Activated CD4-positive, alpha-beta memory T cell treated with anti-CD3 and anti-CD28 coated beads, Interleukin-2, amount 10 ng/mL, durations not matched to agents 7 days and 5 days (primary cell): ENCODE measurements at regions of chr5 and their contacts with region 1.

Region 1: DNA sequence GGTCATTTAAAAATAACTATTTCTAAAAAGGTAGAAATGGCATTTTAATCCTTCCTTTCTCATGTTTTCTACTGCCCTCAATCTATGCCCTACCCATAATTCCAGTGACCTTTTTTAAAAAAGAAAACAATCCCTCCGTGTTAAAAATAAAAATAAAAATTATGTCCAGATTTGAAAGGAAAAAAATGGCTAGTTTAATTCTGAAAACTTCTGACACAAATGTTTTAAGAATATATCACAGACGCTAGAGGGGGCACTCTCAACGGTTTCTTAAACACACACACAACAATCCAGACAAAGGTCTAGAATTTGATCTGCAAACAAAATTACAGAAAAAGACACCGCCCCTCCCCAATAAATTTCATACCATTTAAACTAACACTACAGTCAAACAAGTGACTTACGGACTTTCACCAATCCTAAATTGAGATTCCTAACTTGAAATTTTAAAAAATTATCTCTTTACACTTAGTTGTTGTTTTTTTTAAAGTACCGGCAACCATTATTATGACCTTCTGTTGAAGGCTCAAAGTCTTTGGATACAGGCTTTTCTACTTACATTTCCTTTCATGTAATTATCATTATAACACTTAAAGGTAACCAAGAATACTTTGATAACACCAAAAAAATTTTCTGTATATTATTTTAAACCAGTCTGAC is 38.2 kb downstream of the CLINT1 start:
- DNase-seq: no peak
- H3K4me3 Mint-ChIP-seq: no peak overlapping the region
- H3K27ac Mint-ChIP-seq: no peak overlapping the region
- H3K4me1 Mint-ChIP-seq: peaks cover 17% of the 10 kb centered on the region
- H3K27me3 Mint-ChIP-seq: no peaks in the 10 kb centered on the region

Region 2: DNA sequence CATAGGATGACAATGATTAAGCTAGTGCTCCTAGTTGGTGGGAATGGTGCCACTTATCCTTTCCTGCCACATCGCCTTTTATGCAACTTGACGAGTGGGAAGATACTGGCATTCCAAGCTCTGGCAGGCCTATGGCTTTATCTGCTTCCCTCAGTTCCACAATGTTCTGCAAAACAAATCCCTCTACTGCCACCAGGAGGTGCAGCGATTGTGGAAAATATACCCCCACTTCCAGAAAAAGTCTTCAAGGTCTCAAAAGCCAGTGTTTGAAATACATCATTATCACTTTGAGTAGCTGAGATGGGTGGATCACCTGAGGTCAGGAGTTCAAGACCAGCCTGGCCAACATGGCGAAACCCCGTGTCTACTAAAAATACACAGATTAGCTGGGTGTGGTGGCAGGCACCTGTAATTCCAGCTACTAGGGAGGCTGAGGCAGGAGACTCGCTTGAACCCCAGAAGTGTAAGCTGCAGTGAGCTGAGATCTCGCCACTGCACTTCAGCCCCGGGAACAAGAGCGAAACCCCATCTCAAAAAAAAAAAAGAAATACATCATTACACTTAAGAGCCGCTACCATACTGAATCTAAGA is 34.8 kb after region 1 on chr5:
- CTCF ChIA-PET with region 1: interaction called, 15 read pairs
- POLR2A ChIA-PET with region 1: interaction called, 3 read pairs
- DNase-seq: peak; percentile 22
- H3K4me3 Mint-ChIP-seq: no peak overlapping the region
- H3K27ac Mint-ChIP-seq: no peak overlapping the region
- H3K4me1 Mint-ChIP-seq: peaks cover 61% of the 10 kb centered on the region
- H3K27me3 Mint-ChIP-seq: no peaks in the 10 kb centered on the region